Mammary epithelial cell (primary cell): ENCODE measurements at regions of chr13 and their contacts with region 1.

Region 1: DNA sequence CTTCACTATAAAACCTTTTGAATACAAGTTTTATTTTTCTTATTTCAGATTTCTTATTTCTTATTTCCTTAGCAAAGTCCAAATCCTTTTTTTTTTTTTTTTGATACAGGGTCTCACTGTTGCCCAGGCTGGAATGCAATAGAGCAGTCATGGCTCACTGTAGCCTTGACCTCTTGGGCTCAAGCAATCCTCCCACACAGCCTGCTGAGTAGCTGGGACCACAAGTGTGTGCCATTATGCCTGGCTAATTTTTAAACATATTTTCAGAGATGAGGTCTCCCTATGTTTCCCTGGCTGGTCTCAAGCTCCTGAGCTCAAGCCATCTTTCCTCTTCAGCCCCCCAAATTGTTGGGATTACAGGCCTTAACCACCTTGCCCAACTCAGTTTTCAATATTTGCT is 334.3 kb downstream of the DLEU7 start:
- DNase-seq: no peak
- H3K4me3 ChIP-seq: no peak overlapping the region
- H3K27ac ChIP-seq: no peak overlapping the region
- H3K4me1 ChIP-seq: peaks cover 6% of the 10 kb centered on the region
- H3K27me3 ChIP-seq: no peaks in the 10 kb centered on the region
- CTCF ChIP-seq: no peak

Region 2: DNA sequence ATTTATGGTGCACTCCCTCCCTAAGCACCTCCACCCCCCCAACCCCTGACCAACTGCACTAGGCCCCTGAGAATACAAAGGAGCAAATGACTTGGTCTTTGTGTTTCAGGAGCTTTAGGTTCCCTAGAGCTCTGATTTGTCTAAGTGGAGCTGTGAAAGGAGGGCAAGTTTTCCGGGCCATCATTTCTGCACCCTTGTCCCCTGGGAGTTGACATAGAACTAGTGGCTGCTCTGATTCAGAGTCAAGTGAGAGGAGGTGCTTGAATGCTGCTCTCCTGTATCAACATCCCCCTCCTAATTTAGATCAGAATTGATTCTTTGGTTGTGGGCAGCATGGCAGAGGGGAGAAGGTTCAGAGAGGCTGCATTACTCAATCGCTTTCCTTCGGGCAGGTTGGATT is 102.3 kb before region 1 on chr13:
- CTCF ChIA-PET with region 1: interaction called, 31 read pairs
- dilution Hi-C with region 1: no loop called
- in situ Hi-C with region 1: no loop called
- intact Hi-C with region 1: no loop called
- DNase-seq: no peak
- H3K4me3 ChIP-seq: no peak overlapping the region
- H3K27ac ChIP-seq: no peak overlapping the region
- H3K4me1 ChIP-seq: peaks cover 16% of the 10 kb centered on the region
- H3K27me3 ChIP-seq: no peaks in the 10 kb centered on the region
- CTCF ChIP-seq: no peak

Region 3: DNA sequence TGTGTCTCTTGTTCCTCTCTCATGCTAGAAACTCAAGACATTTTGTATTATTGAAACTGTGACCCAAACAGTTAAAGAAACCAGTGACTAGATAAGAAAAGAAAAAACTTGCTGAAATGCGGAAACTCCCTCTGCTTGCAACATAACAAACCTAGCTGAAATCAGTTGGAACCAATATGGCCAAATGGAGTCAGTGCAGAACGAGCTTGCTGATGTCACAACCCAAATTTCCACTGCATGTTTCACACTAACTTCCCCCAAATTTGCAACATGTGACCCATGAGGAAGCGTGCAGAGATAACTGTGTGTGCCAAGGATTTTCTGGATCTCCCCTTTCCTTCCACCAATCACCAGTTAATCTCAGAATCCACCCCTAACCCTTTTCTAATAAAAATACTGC is 126.3 kb after region 1 on chr13:
- CTCF ChIA-PET with region 1: no interaction called
- dilution Hi-C with region 1: no loop called
- in situ Hi-C with region 1: no loop called
- intact Hi-C with region 1: no loop called
- DNase-seq: peak; percentile 19
- H3K4me3 ChIP-seq: no peak overlapping the region
- H3K27ac ChIP-seq: no peak overlapping the region
- H3K4me1 ChIP-seq: no peaks in the 10 kb centered on the region
- H3K27me3 ChIP-seq: no peaks in the 10 kb centered on the region
- CTCF ChIP-seq: no peak